Endothelial cell of umbilical vein (primary cell): ENCODE measurements at regions of chr5 and their contacts with region 1.

Region 1: DNA sequence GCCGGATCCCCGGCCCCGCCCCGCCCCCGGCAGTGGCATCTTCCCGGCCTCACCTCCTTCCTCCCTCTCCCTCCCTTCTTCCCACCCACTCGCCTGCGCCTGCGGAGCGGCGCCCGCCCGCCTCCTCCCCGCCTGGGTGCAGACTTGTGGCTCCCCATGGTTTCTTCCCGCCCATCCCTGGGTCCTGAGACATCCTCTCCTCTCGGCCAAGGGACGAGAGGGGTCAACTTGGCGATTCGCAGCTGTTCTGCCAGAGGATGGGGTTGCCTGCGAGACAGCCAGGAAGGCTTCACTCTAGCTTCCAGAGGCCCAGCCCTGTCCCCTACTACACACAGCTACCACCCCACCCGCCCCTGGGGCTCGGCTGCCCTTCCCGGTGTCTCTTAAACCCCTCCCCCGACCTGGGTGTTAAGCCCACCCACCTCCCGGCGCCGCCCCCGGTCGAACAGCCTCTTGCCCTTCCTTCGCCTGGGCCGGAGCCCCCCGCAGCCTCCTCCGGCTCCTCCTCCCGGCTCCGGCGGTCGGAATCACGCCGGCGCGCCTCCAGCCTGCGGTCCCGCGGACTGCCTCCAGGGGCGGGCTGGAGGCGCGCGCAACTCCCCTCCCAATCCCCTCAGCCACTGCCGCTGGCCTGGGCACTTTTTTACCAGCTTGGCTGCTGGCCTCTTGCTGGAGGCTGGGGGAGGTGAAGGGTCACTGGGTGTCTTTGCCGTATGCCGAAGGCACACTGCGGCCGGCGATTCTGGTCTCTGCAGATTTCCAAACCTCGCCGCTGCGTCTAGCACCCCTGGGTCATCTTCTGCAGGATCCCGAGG is 1.9 kb downstream of the JADE2 start:
- DNase-seq: peak; percentile 84
- H3K4me3 ChIP-seq: peak overlapping the region; percentile 3 to 76 (median 46)
- H3K27ac ChIP-seq: peak overlapping the region; percentile 56
- H3K4me1 ChIP-seq: peaks cover 20% of the 10 kb centered on the region
- H3K27me3 ChIP-seq: no peaks in the 10 kb centered on the region
- CTCF ChIP-seq: peak; percentile 75 to 90
- POLR2A ChIP-seq: peak; percentile 46

Region 2: DNA sequence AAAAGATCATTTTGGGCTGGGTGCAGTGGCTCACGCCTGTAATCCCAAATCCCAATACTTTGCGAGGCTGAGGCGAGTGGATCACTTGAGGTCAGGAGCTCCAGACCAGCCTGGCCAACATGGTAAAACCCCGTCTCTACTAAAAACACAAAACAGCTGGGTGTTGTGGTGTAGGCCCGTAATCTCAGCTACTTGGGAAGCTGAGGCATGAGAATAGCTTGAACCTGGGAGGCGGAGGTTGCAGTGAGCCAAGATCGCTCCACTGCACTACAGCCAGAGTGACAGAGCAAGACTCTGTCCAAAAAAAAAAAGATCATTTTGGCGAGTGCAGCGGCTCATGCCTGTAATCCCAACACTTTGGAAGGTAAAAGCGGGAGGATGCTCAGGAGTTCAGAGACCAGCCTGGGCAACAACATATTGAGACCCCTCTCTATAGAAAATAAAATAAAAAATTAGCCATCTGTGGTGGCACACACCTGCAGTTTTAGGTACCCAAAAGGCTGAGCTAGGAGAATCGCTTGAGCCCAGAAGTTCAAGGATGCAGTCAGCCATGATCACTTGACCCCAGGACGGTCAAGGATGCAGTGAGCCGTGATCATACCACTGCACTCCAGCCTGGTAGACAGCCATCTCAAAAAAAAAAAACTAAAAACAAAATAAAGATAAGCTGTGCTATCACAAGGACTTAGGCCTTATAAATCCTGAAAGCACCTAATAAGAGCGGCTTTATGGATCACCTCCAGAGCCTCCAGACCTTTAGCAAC is 317.7 kb before region 1 on chr5:
- CTCF ChIA-PET with region 1: no interaction called
- POLR2A ChIA-PET with region 1: no interaction called
- dilution Hi-C with region 1: no loop called
- intact Hi-C with region 1: no loop called
- DNase-seq: no peak
- H3K4me3 ChIP-seq: no peak overlapping the region
- H3K27ac ChIP-seq: no peak overlapping the region
- H3K4me1 ChIP-seq: no peaks in the 10 kb centered on the region
- H3K27me3 ChIP-seq: no peaks in the 10 kb centered on the region
- CTCF ChIP-seq: no peak
- POLR2A ChIP-seq: no peak

Region 3: GRCh38 chr5:134411546-134412266 is 115.6 kb before region 1 on chr5 and contains the start of gene CDKN2AIPNL:
- CTCF ChIA-PET with region 1: interaction called, 90 read pairs
- POLR2A ChIA-PET with region 1: interaction called, 4 read pairs
- dilution Hi-C with region 1: no loop called
- intact Hi-C with region 1: loop called (anchors 1 kb)
- DNase-seq: peak; percentile 86
- H3K4me3 ChIP-seq: peak within 1 kb of the TSS; percentile 75 to 88 (median 84)
- H3K27ac ChIP-seq: peak within 1 kb of the TSS; percentile 40
- H3K4me1 ChIP-seq: peaks cover 15% of the 10 kb centered on the region
- H3K27me3 ChIP-seq: no peaks in the 10 kb centered on the region
- CTCF ChIP-seq: peak; percentile 71 to 86
- POLR2A ChIP-seq: peak; percentile 86
- total RNA-seq, gene CDKN2AIPNL: 35.1 and 36.5 TPM in 2 replicates

Region 4: GRCh38 chr5:134503088-134503946 is 24.0 kb before region 1 on chr5:
- CTCF ChIA-PET with region 1: interaction called, 7 read pairs
- POLR2A ChIA-PET with region 1: interaction called, 5 read pairs
- dilution Hi-C with region 1: no loop called
- intact Hi-C with region 1: loop called (anchors 1 kb)
- DNase-seq: peak; percentile 98
- H3K4me3 ChIP-seq: no peak overlapping the region
- H3K27ac ChIP-seq: peak overlapping the region; percentile 82
- H3K4me1 ChIP-seq: peaks cover 17% of the 10 kb centered on the region
- H3K27me3 ChIP-seq: no peaks in the 10 kb centered on the region
- CTCF ChIP-seq: no peak
- POLR2A ChIP-seq: peak; percentile 51

Region 5: DNA sequence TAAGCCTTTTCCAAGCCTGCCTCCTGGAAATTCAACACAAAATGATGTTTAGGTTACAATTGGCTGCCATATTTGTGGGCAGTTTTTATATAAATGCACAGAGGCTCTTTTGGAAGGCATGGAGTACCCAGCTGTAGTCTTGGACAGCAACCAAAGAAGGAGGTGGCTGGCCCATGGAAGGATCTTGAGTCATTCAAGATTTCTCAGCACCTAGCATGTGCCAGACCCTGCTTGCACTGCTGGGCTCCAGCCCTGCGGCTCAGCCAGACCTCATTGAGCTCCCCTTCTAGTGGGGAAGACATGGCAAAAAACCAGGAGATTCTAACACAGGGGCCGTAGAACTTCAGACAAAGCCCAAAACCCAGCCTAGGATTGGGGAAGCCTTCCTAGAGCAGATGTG is 20.2 kb after region 1 on chr5:
- CTCF ChIA-PET with region 1: interaction called, 24 read pairs
- POLR2A ChIA-PET with region 1: interaction called, 6 read pairs
- dilution Hi-C with region 1: no loop called
- intact Hi-C with region 1: loop called (anchors 1 kb)
- DNase-seq: peak; percentile 37
- H3K4me3 ChIP-seq: no peak overlapping the region
- H3K27ac ChIP-seq: no peak overlapping the region
- H3K4me1 ChIP-seq: peaks cover 35% of the 10 kb centered on the region
- H3K27me3 ChIP-seq: no peaks in the 10 kb centered on the region
- CTCF ChIP-seq: no peak
- POLR2A ChIP-seq: no peak

Region 6: GRCh38 chr5:134561871-134562296 is 34.5 kb after region 1 on chr5:
- CTCF ChIA-PET with region 1: interaction called, 26 read pairs
- POLR2A ChIA-PET with region 1: no interaction called
- dilution Hi-C with region 1: no loop called
- intact Hi-C with region 1: loop called (anchors 1 kb)
- DNase-seq: peak; percentile 98
- H3K4me3 ChIP-seq: no peak overlapping the region
- H3K27ac ChIP-seq: peak overlapping the region; percentile 47
- H3K4me1 ChIP-seq: peaks cover 20% of the 10 kb centered on the region
- H3K27me3 ChIP-seq: no peaks in the 10 kb centered on the region
- CTCF ChIP-seq: peak; percentile 75 to 86
- POLR2A ChIP-seq: peak; percentile 47

Region 7: DNA sequence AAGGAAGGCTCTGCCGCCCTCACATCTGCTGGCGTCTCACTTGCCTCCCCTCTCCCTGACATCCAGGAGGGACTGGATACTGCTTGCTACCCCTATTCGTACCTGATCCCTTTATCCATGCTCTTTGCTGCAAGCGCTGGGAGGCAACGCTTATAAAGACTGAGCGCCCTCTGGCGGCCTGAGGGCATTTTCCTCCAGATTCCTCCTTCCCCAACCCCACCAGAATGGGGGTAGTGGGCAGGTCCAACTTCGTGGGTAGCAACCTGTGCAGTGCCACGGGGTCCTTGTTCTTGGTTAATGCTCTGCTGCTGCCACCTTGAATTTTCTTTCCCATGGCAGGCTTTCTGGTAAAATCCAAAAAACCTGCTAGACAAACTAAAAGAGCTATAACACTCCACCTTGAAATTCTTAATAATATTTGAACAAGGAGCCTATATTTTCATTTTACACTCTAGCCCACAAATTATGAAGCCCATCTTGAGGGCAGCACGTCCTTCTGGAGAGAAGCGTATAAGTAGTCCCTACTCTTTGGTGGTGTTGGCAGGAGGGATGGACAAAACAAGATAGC is 50.5 kb after region 1 on chr5:
- CTCF ChIA-PET with region 1: interaction called, 58 read pairs
- POLR2A ChIA-PET with region 1: interaction called, 3 read pairs
- dilution Hi-C with region 1: no loop called
- intact Hi-C with region 1: loop called (anchors 1 kb)
- DNase-seq: peak; percentile 80
- H3K4me3 ChIP-seq: no peak overlapping the region
- H3K27ac ChIP-seq: peak overlapping the region; percentile 67
- H3K4me1 ChIP-seq: peaks cover 37% of the 10 kb centered on the region
- H3K27me3 ChIP-seq: no peaks in the 10 kb centered on the region
- CTCF ChIP-seq: peak; percentile 83 to 88
- POLR2A ChIP-seq: no peak